ENCODE measurements at regions of chr10 and their contacts with region 1.

Region 1: DNA sequence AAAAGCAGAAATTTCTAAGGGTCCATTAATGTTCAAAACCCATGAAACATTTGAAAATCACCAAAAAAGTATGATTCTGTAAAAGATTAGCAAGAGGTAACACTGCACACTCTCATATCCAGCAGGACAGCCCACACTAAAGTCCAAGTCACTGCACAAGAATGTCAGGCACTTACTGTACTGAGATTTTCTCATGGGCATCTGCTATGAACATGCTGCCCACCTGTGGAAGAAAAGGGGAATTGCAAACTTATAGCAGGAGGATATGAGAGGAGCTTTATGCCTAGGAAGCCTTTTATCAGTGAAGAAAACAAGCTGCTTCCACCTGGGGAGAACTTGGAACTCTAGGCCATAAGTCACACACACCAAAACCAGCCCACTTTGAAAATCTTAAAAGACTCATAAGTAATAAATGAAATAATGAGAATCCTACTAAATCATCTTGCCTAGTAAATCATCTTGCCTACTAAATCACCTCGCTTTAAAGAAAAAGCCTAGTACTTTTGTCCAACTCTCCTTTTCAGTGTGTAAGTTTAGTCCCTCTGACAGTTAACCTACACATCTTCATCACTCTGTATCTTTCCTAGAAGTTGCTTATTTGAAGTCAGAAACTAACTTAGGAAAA is 46.1 kb downstream of the ARMH3 start:
- DNase-seq: peak; percentile 88
- ATAC-seq: peak; percentile 97
- H3K4me3 ChIP-seq: no peak overlapping the region
- H3K27ac ChIP-seq: no peak overlapping the region
- H3K4me1 ChIP-seq: peaks cover 5 to 7% of the 10 kb centered on the region in 2 experiments
- H3K27me3 ChIP-seq: no peaks in the 10 kb centered on the region
- CTCF ChIP-seq: peak; percentile 98 to 100 (median 99)
- POLR2A ChIP-seq: no peak
- RAD21 ChIP-seq: peak; percentile 100

Region 2: GRCh38 chr10:101602761-101603398 is 407.0 kb before region 1 on chr10:
- CTCF ChIA-PET with region 1: interaction called, 30 read pairs
- POLR2A ChIA-PET with region 1: no interaction called
- RAD21 ChIA-PET with region 1: interaction called in 1 of 2 experiments, 3 read pairs
- intact Hi-C with region 1: loop called (anchors 2 kb)
- DNase-seq: peak; percentile 71
- ATAC-seq: peak; percentile 99
- H3K4me3 ChIP-seq: no peak overlapping the region
- H3K27ac ChIP-seq: no peak overlapping the region
- H3K4me1 ChIP-seq: no peaks in the 10 kb centered on the region
- H3K27me3 ChIP-seq: no peaks in the 10 kb centered on the region
- CTCF ChIP-seq: peak; percentile 97 to 99 (median 99)
- POLR2A ChIP-seq: no peak
- RAD21 ChIP-seq: peak; percentile 96

Region 3: DNA sequence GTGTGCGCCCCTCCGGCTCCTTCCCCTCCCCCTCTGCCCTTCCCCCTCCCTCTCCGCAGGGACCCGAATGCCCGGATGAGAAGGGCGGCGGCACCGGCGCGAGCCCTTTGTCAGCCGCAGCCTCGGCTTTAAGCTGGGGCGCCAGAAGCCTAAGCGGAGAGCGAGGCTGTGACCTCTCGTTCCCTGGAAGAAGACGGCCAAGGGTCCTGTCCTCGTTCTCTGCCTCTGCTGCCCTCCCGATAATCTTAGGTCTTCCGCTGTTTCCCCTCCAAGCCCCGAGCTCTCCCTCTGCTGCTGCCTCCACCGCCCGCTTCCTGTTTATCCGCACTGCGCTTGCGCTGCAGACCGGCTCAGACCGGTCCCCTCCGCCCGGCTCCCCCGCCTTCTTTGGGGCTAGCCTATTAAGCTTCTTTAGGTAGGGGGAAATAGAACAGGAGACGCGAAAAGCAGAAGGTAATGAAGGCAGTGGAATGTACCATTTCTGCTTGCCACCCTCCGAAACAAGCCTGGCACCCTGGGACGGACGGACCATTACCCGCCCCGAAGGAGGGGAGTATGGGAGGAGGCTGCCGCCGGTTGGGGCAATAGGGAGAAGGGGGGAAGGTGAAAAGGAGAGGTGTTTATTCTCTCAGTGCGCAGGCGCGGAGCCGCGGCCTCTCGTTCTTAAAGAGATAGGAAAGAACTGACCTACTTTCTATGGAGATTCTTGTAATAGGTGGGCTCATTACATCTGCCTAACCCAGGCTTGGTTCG is 191.6 kb before region 1 on chr10 and contains the start of gene OGA:
- CTCF ChIA-PET with region 1: interaction called, 14 read pairs
- POLR2A ChIA-PET with region 1: interaction called, 5 read pairs
- RAD21 ChIA-PET with region 1: interaction called in 1 of 2 experiments, 9 read pairs
- intact Hi-C with region 1: no loop called
- DNase-seq: peak; percentile 100
- ATAC-seq: peak; percentile 91
- H3K4me3 ChIP-seq: peak within 1 kb of the TSS; percentile 87 to 96
- H3K27ac ChIP-seq: peak within 1 kb of the TSS; percentile 81
- H3K4me1 ChIP-seq: peaks cover 18 to 31% of the 10 kb centered on the region in 2 experiments
- H3K27me3 ChIP-seq: no peaks in the 10 kb centered on the region
- CTCF ChIP-seq: no peak
- POLR2A ChIP-seq: peak; percentile 90
- RAD21 ChIP-seq: no peak
- total RNA-seq, gene OGA: 127 TPM

Region 4: DNA sequence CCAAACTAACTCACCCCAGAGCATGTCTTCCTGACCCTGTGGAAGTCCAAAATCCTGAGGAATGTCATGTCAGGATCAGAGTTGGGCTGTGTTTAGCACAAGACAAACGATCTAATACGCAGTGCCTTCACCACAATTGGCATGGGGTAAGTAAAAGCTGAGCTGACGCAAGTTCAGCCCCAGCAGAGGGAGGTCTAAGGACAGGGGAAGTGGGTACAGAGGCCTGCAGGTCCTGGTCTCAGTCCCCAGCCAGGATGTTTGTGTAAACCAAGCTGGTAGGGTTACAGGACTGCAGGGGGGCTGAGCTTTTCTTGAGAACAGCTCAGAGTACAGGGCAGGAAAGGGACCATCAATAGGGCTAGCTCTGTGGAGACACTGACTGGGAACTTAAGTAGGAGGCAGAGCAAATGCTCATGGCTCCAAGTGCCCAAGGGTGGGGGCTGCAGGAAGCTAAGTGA is 161.0 kb before region 1 on chr10:
- CTCF ChIA-PET with region 1: interaction called, 267 read pairs
- POLR2A ChIA-PET with region 1: interaction called, 3 read pairs
- RAD21 ChIA-PET with region 1: no interaction called
- intact Hi-C with region 1: no loop called
- DNase-seq: no peak
- ATAC-seq: no peak
- H3K4me3 ChIP-seq: no peak overlapping the region
- H3K27ac ChIP-seq: no peak overlapping the region
- H3K4me1 ChIP-seq: peaks cover 0 to 7% of the 10 kb centered on the region in 2 experiments; a peak in 1 of 4 replicates
- H3K27me3 ChIP-seq: no peaks in the 10 kb centered on the region
- CTCF ChIP-seq: no peak
- POLR2A ChIP-seq: no peak
- RAD21 ChIP-seq: no peak

Region 5: GRCh38 chr10:101897633-101898032 is 112.3 kb before region 1 on chr10:
- CTCF ChIA-PET with region 1: interaction called, 92 read pairs
- POLR2A ChIA-PET with region 1: no interaction called
- RAD21 ChIA-PET with region 1: interaction called in 1 of 2 experiments, 3 read pairs
- intact Hi-C with region 1: no loop called
- DNase-seq: no peak
- ATAC-seq: no peak
- H3K4me3 ChIP-seq: no peak overlapping the region
- H3K27ac ChIP-seq: no peak overlapping the region
- H3K4me1 ChIP-seq: peaks cover 0 to 12% of the 10 kb centered on the region in 2 experiments; a peak in 2 of 4 replicates
- H3K27me3 ChIP-seq: no peaks in the 10 kb centered on the region
- CTCF ChIP-seq: no peak
- POLR2A ChIP-seq: no peak
- RAD21 ChIP-seq: no peak

Region 6: DNA sequence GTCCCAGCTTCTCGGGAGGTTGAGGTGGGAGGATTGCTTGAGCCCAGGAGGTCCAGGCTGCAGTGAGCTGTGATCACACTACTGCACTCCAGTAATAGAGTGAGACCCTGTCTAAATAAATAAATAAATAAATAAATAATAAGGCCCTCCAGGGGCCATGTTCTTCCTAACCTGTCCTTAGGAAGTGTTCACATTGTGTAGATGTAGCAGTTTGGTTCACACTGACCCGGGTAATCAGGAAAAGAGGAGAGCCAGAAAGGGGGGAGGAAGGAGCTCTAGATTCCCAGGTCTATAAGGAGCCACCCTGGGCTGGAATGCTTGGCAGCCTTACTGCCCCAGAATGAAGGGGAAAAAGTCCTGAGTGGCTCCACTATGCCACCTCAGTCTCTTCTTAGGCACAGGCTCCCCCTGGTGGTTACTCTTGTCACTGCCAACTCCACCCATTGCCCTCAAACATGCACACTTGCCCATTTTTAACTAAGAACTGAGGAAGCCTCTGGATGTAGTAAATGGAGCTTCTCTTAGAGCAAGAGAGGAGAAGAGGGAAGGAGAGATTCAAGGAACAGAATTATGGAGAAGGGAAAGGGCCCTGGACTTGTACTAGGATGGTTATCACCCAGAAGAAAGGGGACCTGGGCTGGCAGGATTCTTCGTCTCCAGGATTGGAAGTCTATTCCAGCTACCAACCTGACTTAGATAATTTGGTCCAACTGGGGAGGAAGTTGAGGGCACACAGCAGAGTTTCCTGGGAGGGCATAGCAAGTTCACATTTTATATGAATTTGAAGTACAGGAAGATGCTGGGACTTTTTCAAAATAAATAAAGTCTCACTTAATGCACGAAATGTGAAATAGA is 63.0 kb after region 1 on chr10:
- CTCF ChIA-PET with region 1: interaction called, 15 read pairs
- POLR2A ChIA-PET with region 1: no interaction called
- RAD21 ChIA-PET with region 1: interaction called in 1 of 2 experiments, 4 read pairs
- intact Hi-C with region 1: loop called (anchors 1 kb)
- DNase-seq: peak; percentile 87
- ATAC-seq: peak; percentile 96
- H3K4me3 ChIP-seq: no peak overlapping the region
- H3K27ac ChIP-seq: no peak overlapping the region
- H3K4me1 ChIP-seq: peaks cover 5 to 6% of the 10 kb centered on the region in 2 experiments; a peak in 2 of 4 replicates
- H3K27me3 ChIP-seq: peaks cover under 1% of the 10 kb centered on the region; the same call in 1 of the 2 replicates
- CTCF ChIP-seq: peak in 2 of 3 experiments; percentile 100; a peak in 4 of 6 replicates
- POLR2A ChIP-seq: no peak
- RAD21 ChIP-seq: no peak

Measured in HCT116 (cell line).